BJ (cell line): ENCODE measurements at regions of chr16 and their contacts with region 1.

Region 1: GRCh38 chr16:75110637-75111513 is 5.7 kb downstream of the LDHD start:
- DNase-seq: peak; percentile 29
- H3K4me3 ChIP-seq: 0 out of 2 replicates have a peak overlapping the region, but pooled peaks have one; percentile 13
- H3K27me3 ChIP-seq: no peaks in the 10 kb centered on the region
- CTCF ChIP-seq: peak; percentile 94

Region 2: GRCh38 chr16:73725156-73725555 is 1385.7 kb before region 1 on chr16:
- CTCF ChIA-PET with region 1: no interaction called
- POLR2A ChIA-PET with region 1: no interaction called
- DNase-seq: no peak
- H3K4me3 ChIP-seq: no peak overlapping the region
- H3K27me3 ChIP-seq: no peaks in the 10 kb centered on the region
- CTCF ChIP-seq: no peak

Region 3: DNA sequence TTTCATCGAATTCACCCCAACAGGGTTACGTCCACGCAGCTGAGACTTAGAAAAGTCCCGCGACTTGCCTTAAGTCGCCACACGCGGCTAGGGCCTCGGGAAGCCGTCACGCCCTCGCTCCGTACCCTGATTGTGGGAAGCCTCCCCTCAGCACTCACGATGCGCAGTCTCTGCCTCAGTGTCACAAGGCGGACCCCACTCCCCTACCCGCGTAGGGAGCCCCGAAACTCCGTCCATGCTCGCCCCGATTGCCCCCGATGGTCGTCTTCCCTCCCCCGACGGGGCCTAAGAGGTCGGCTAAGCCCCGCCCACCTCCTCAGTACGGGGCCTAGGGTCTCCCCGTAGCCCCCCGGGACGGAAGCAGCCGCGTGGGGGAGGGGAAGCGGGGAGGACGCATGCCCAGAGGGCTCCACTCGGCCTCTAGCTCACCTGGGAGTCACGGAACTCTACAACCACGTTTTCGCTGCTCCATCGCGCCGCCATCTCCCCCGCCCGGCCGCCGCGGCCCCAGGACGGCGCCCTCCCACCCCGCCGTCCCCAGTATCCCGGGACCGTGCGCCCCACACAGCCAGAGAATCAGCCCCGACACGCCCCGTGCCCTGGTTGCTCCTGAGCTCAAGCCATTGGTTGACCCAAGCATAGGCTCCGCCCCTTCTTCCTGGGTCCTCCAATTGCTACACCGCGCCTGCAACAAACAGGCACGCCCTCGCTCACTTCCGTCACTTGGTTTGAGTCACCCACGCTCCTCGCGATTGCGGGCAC is 126.2 kb before region 1 on chr16 and contains the start of gene WDR59:
- CTCF ChIA-PET with region 1: interaction called, 23 read pairs
- POLR2A ChIA-PET with region 1: no interaction called
- DNase-seq: peak; percentile 95
- H3K4me3 ChIP-seq: peak within 1 kb of the TSS; percentile 94
- H3K27me3 ChIP-seq: no peaks in the 10 kb centered on the region
- CTCF ChIP-seq: no peak
- polyA plus RNA-seq, gene WDR59: 36.7 and 47.5 TPM in 2 replicates

Region 4: GRCh38 chr16:75011634-75012307 is 99.1 kb before region 1 on chr16:
- CTCF ChIA-PET with region 1: interaction called, 15 read pairs
- POLR2A ChIA-PET with region 1: interaction called, 6 read pairs
- DNase-seq: peak; percentile 81
- H3K4me3 ChIP-seq: no peak overlapping the region
- H3K27me3 ChIP-seq: no peaks in the 10 kb centered on the region
- CTCF ChIP-seq: no peak

Region 5: GRCh38 chr16:75099756-75100602 is 10.9 kb before region 1 on chr16:
- CTCF ChIA-PET with region 1: interaction called, 18 read pairs
- POLR2A ChIA-PET with region 1: no interaction called
- DNase-seq: no peak
- H3K4me3 ChIP-seq: no peak overlapping the region
- H3K27me3 ChIP-seq: no peaks in the 10 kb centered on the region
- CTCF ChIP-seq: no peak

Region 6: DNA sequence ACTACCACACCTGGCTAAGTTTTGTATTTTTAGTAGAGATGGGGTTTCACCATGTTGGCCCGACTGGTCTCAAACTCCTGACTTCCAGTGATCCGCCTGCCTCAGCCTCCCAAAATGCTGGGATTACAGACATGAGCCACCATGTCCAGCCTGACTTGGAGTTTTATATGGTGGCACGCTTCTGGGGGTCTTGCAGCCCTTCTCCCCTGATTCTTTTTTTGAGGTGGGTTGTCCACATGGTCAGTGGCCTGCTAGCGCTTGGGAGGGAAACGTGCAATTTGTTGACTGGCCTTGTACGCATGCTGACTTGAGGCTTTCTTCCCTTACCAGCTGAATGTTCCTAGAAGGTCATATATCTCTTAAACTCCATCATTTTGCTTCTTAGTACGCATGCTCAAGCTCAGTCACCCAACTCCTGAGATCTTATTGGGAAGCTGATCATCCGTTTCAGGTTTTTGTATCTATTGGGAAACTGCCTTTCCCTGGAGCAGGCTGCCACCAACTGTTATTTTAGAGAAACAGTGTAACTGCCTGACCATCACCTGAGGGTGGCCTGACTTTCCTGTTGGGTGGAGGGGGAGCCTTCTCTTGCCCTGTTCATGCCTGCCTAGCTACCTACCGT is 19.4 kb after region 1 on chr16:
- CTCF ChIA-PET with region 1: interaction called, 10 read pairs
- POLR2A ChIA-PET with region 1: no interaction called
- DNase-seq: no peak
- H3K4me3 ChIP-seq: no peak overlapping the region
- H3K27me3 ChIP-seq: peaks cover 3% of the 10 kb centered on the region
- CTCF ChIP-seq: 0 out of 2 replicates have a peak, but pooled peaks have one; percentile 6

Region 7: DNA sequence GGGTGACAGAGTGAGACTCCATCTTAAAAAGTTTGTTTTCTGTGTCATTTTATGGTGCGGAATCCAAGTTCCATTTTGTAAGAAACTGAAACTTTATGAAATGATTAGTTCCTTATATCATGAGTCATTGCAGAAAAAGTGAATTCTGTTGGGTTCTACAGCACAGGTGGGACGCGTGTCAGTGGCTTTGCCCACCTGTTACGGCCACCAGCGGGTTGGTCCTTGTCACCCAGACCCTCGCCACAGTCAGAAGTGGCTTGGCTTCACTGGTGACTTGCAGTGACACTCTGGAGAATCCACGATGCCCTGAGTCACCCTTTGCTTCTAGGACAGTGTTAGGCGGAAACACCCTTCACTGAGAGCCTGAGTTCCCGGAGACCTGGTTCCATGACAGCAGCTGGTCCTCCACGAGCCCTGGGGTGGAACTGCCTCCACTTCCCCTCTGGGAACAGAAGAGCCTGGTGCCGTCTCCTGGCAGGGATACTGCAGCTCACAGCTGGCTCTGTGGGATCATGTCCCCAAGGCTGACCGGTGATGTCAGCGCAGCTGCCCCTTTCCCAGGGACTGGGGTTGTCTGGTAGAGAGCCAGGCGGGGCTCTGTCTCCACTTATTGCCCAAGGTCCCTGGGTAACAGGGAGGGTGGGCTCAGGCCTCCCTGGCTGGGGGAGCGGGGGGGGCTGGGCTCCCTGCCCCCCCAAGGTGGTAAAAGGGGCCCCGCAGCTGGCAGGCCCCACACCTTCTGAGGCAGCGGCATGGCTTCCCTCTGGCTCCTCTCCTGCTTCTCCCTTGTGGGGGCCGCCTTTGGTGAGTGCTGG is 107.6 kb after region 1 on chr16 and contains the start of gene CTRB1:
- CTCF ChIA-PET with region 1: no interaction called
- POLR2A ChIA-PET with region 1: no interaction called
- DNase-seq: no peak
- H3K4me3 ChIP-seq: no peak within 1 kb of the TSS
- H3K27me3 ChIP-seq: no peaks in the 10 kb centered on the region
- CTCF ChIP-seq: no peak
- polyA plus RNA-seq, gene CTRB1: not detected in 2 replicates